ENCODE measurements at regions of chr12 and their contacts with region 1.

Region 1: GRCh38 chr12:65878544-65878943 is 54.3 kb downstream of the HMGA2 start:
- DNase-seq: no peak
- ATAC-seq: no peak

Region 2: DNA sequence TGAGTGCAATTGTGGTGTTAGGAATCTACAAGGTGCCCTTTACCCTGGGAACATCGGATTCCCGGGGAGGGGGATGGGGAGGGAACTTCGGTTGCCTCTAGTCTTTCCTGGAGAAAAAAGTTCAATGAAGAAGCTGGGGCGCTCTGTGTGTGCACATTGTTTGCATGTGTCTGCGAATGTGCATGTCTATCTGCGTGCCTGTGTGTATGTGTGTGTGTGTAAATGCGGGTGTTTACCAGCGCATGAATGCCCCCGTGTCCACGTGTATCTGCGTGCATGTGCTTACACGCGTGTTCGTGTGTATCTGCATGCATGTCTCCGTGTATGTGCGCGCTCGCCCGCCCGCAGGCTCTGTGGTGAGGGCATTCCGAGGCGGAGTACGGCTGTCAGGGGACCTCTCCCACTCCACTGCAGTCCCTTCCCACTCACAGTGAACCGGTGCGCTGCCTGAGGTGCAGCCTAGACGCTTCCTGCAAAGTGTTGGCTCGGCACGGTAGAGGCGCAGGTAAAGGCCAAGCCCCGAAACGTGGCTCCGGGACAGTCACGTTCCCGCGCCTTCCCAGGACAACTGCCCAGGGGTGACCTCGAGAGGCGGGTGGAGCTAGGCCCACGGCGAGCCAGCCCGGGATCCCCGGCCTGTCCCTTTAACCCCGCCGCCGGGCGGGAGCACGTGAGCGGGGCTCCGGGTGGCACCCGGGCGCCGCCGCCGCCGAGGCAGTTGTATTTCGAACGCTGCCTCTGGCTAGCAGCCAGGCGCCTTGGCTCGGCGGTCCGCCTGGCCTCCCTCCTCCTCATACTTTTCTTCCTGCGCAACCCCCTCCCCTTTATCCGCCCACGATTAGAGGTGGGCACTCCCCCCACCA is 54.8 kb before region 1 on chr12:
- intact Hi-C with region 1: loop called (anchors 10 kb)
- DNase-seq: peak; percentile 62
- ATAC-seq: peak; percentile 52